ENCODE measurements at regions of chr7 and their contacts with region 1.

Region 1: DNA sequence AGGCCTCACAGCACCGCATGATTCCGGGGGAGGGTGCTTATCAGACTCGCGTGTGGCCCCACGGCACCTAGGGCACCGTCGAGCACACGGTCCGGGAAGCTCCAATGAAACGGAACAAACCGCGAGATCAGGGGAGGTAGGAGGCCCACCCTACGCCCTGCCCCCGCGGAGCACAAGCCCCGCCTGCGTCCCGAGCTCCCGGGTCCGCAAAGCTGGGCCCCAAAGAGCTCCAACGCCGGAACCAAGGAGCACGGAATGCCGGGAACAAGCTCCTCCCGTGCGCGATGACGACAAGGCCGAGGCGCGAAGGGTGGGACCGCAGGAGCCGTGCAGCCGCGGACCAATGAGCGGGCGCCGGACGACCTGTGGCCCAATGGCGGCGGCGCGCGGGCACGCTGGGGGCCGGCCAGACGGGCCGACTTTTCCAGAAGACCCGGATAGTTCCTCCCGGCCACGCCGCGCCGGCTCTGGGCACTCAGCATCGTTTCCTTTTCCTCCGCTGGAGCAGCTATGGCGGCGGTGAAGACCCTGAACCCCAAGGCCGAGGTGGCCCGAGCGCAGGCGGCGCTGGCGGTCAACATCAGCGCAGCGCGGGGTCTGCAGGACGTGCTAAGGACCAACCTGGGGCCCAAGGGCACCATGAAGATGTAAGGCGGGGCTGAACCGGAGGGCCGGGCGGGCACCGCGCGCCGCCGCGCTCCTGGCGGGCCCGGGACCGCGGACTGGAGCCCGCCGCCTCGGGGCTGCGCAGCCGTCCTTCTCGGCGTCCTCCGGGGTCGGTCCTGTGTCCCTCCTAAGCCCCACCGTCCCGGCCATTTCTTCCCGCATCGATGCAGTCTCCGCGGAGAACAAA is at the starts of genes CCT6A and PSPH:
- DNase-seq: peak; percentile 100
- H3K4me3 ChIP-seq: peak within 1 kb of the TSS; percentile 97
- H3K27ac ChIP-seq: peak within 1 kb of the TSS; percentile 78
- H3K4me1 ChIP-seq: peaks cover 40% of the 10 kb centered on the region
- H3K27me3 ChIP-seq: no peaks in the 10 kb centered on the region
- CTCF ChIP-seq: no peak
- total RNA-seq, gene CCT6A: 308 and 323 TPM in 2 replicates
- total RNA-seq, gene PSPH: 89.5 and 103 TPM in 2 replicates

Region 2: DNA sequence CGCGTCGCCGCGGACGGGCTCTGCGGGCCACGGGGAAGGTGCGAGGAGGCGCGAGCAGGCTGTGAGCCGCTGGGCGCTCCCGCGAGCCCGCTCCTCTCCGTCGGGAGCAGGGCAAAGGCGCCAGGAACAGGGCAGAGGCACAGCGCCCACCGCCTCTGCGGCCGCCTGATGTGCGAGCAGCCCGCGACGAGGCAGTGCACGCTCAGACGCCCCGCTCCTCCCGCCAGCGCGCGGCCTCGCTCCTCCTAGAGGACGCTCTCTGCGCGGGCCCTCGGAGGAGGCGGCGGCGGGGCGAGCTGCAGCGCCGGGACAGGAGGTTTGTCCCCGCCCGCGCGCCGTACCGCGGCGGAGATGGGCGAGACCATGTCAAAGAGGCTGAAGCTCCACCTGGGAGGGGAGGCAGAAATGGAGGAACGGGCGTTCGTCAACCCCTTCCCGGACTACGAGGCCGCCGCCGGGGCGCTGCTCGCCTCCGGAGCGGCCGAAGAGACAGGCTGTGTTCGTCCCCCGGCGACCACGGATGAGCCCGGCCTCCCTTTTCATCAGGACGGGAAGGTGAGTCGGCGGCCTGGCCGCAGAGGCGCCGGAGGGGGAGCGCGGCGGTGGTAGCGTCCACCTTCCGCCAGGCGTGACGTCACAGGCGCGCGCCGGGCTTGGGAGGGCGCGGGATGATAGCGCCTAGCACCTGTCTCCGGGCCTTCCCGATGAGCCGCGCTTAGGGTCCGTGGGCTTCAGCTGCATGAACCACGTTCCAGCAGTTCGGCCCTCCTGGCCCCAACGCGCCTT is 685.7 kb before region 1 on chr7:
- CTCF ChIA-PET with region 1: no interaction called
- POLR2A ChIA-PET with region 1: interaction called, 4 read pairs
- intact Hi-C with region 1: loop called (anchors 5 kb)
- DNase-seq: peak; percentile 95 to 99
- H3K4me3 ChIP-seq: peak overlapping the region; percentile 78
- H3K27ac ChIP-seq: peak overlapping the region; percentile 89
- H3K4me1 ChIP-seq: peaks cover 23% of the 10 kb centered on the region
- H3K27me3 ChIP-seq: peaks cover 7% of the 10 kb centered on the region; the same call in 1 of the 2 replicates
- CTCF ChIP-seq: peak; percentile 52; the same call in 1 of the 2 replicates

Region 3: GRCh38 chr7:55964261-55965099 is 87.1 kb before region 1 on chr7 and contains the start of gene NIPSNAP2:
- CTCF ChIA-PET with region 1: interaction called, 6 read pairs
- POLR2A ChIA-PET with region 1: interaction called, 10 read pairs
- intact Hi-C with region 1: loop called (anchors 1 kb)
- DNase-seq: peak; percentile 63 to 89
- H3K4me3 ChIP-seq: peak within 1 kb of the TSS; percentile 67
- H3K27ac ChIP-seq: peak within 1 kb of the TSS; percentile 54
- H3K4me1 ChIP-seq: peaks cover 19% of the 10 kb centered on the region
- H3K27me3 ChIP-seq: no peaks in the 10 kb centered on the region
- CTCF ChIP-seq: peak; percentile 64
- total RNA-seq, gene NIPSNAP2: 96.1 and 97.5 TPM in 2 replicates

Region 4: DNA sequence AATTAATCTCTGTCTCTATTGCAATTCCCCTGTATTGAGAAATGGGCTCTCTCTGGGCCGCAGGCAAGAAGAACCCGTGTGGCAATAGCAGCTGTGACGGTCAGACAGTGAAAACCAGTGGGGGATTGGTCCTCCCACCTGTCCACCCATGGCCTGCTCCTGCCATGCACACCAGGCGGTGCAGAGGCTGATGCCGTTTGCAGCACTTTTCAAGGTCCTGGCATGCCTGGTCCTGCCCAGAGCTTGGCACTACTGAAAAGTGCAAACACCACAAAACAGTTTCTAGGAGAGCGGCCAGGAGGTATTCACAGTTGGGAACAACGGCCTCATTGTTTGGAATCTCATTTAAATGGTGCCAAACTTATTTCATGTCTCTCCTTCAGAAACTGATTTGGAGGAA is 41.9 kb before region 1 on chr7:
- CTCF ChIA-PET with region 1: no interaction called
- POLR2A ChIA-PET with region 1: interaction called, 26 read pairs
- intact Hi-C with region 1: no loop called
- DNase-seq: no peak
- H3K4me3 ChIP-seq: no peak overlapping the region
- H3K27ac ChIP-seq: no peak overlapping the region
- H3K4me1 ChIP-seq: no peaks in the 10 kb centered on the region
- H3K27me3 ChIP-seq: no peaks in the 10 kb centered on the region
- CTCF ChIP-seq: no peak

Region 5: DNA sequence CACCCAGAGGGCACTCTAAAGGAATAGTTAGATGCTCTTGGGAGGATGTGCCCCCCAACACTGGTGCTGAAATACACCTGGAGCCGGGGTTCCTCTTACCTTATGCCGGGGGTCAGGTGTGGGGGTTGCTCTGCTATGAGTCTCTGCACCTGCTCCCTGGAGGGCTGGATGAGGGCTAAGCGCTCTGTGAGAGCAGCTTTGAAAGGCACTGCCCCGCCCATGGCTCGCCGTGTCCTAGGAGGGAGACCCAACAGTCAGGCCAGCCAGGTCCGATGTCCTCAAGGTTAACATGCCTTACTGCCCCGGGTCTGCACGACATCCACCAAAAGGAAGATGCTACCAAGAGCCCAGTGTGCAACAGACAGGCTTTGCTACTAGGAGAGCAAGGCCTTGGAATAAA is 32.1 kb before region 1 on chr7:
- CTCF ChIA-PET with region 1: no interaction called
- POLR2A ChIA-PET with region 1: interaction called, 10 read pairs
- intact Hi-C with region 1: no loop called
- DNase-seq: no peak
- H3K4me3 ChIP-seq: no peak overlapping the region
- H3K27ac ChIP-seq: no peak overlapping the region
- H3K4me1 ChIP-seq: no peaks in the 10 kb centered on the region
- H3K27me3 ChIP-seq: no peaks in the 10 kb centered on the region
- CTCF ChIP-seq: no peak

Region 6: GRCh38 chr7:56040734-56041133 is 10.8 kb before region 1 on chr7:
- CTCF ChIA-PET with region 1: no interaction called
- POLR2A ChIA-PET with region 1: interaction called, 42 read pairs
- intact Hi-C with region 1: no loop called
- DNase-seq: no peak
- H3K4me3 ChIP-seq: no peak overlapping the region
- H3K27ac ChIP-seq: no peak overlapping the region
- H3K4me1 ChIP-seq: no peaks in the 10 kb centered on the region
- H3K27me3 ChIP-seq: no peaks in the 10 kb centered on the region
- CTCF ChIP-seq: no peak

Region 7: DNA sequence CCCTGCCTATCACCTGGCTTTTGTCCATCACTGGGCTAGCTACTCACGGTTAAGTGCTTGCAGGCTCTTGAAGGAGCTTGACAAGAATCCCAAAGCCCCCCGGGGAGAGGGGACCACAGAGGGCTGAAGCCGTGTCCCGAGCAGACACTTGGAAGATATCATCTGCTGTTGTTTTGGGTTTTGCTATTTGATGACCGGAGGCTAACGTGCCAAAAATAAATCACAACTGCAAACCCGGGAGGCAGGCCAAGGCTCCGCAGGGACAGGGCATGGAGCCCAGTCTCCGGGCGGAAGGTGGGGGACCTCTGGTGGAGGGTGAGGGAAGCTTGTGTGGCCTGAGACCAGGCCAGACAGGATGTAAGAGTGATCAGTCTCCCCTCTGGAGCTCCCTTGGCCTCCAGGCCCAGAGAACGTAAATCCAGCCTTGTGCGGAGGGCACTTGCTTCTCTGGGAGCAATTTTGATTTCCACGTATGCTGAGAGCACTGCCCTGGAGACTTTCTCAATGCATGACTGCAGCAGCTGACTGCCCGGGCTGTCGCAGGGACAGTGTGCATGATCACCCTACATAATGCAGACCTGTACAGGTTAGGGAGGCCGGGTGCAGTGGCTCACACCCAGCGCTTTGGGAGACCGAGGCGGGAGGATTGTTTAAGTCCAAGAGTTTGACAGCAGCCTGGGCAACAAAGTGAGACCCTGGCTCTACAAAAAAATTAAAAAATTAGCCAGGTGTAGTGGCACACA is 41.4 kb after region 1 on chr7 and contains the start of gene PHKG1:
- CTCF ChIA-PET with region 1: no interaction called
- POLR2A ChIA-PET with region 1: interaction called, 13 read pairs
- intact Hi-C with region 1: no loop called
- DNase-seq: peak in 1 of 2 experiments; percentile 52
- H3K4me3 ChIP-seq: no peak within 1 kb of the TSS
- H3K27ac ChIP-seq: no peak within 1 kb of the TSS
- H3K4me1 ChIP-seq: no peaks in the 10 kb centered on the region
- H3K27me3 ChIP-seq: no peaks in the 10 kb centered on the region
- CTCF ChIP-seq: 0 out of 2 replicates have a peak, but pooled peaks have one; percentile 40
- total RNA-seq, gene PHKG1: 2.7 and 3.9 TPM in 2 replicates

Measured in PC-9 (cell line).